ENCODE measurements at regions of chr1 and their contacts with region 1.

Region 1: GRCh38 chr1:88791192-88791591 is 100.2 kb downstream of the GTF2B start:
- DNase-seq: no peak
- H3K4me3 ChIP-seq: no peak overlapping the region
- H3K4me3 Mint-ChIP-seq: no peak overlapping the region
- H3K27ac Mint-ChIP-seq: no peak overlapping the region
- H3K4me1 ChIP-seq: no peaks in the 10 kb centered on the region
- H3K4me1 Mint-ChIP-seq: no peaks in the 10 kb centered on the region
- H3K27me3 ChIP-seq: no peaks in the 10 kb centered on the region
- H3K27me3 Mint-ChIP-seq: no peaks in the 10 kb centered on the region
- CTCF ChIP-seq: no peak

Region 2: GRCh38 chr1:88595355-88596002 is 195.7 kb before region 1 on chr1:
- CTCF ChIA-PET with region 1: no interaction called
- POLR2A ChIA-PET with region 1: no interaction called
- intact Hi-C with region 1: no loop called
- DNase-seq: peak in 1 of 2 experiments; percentile 30
- H3K4me3 ChIP-seq: no peak overlapping the region
- H3K4me3 Mint-ChIP-seq: no peak overlapping the region
- H3K27ac Mint-ChIP-seq: no peak overlapping the region
- H3K4me1 ChIP-seq: no peaks in the 10 kb centered on the region
- H3K4me1 Mint-ChIP-seq: no peaks in the 10 kb centered on the region
- H3K27me3 ChIP-seq: no peaks in the 10 kb centered on the region
- H3K27me3 Mint-ChIP-seq: no peaks in the 10 kb centered on the region
- CTCF ChIP-seq: no peak

Region 3: GRCh38 chr1:88753506-88753905 is 37.7 kb before region 1 on chr1:
- CTCF ChIA-PET with region 1: no interaction called
- POLR2A ChIA-PET with region 1: no interaction called
- intact Hi-C with region 1: loop called (anchors 1 kb)
- DNase-seq: no peak
- H3K4me3 ChIP-seq: no peak overlapping the region
- H3K4me3 Mint-ChIP-seq: no peak overlapping the region
- H3K27ac Mint-ChIP-seq: no peak overlapping the region
- H3K4me1 ChIP-seq: no peaks in the 10 kb centered on the region
- H3K4me1 Mint-ChIP-seq: peaks cover 6% of the 10 kb centered on the region
- H3K27me3 ChIP-seq: no peaks in the 10 kb centered on the region
- H3K27me3 Mint-ChIP-seq: no peaks in the 10 kb centered on the region
- CTCF ChIP-seq: no peak

Region 4: DNA sequence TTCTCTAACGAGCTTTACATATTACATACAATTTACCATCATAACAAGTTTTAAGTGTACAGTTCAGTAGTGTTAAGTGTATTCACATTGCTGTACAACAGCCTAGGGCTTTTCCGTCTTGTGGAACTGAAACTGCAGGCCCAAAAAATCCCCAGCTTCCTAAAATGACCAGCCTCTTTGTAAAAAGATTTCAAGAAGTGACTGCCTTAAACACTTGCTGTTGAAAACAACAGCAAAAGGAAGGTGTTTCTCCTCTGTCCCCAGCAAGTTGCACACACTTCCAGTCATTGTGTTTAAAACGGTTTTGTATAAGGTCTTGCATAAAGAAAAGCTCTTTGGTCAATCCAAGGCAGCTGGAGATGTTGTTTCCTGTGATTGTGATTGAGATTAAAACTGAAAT is 289.8 kb after region 1 on chr1:
- CTCF ChIA-PET with region 1: no interaction called
- POLR2A ChIA-PET with region 1: no interaction called
- intact Hi-C with region 1: no loop called
- DNase-seq: no peak
- H3K4me3 ChIP-seq: no peak overlapping the region
- H3K4me3 Mint-ChIP-seq: no peak overlapping the region
- H3K27ac Mint-ChIP-seq: no peak overlapping the region
- H3K4me1 ChIP-seq: no peaks in the 10 kb centered on the region
- H3K4me1 Mint-ChIP-seq: no peaks in the 10 kb centered on the region
- H3K27me3 ChIP-seq: no peaks in the 10 kb centered on the region
- H3K27me3 Mint-ChIP-seq: no peaks in the 10 kb centered on the region
- CTCF ChIP-seq: no peak

Measured in Caco-2 (cell line).